ENCODE measurements at regions of chr4 and their contacts with region 1.

Region 1: DNA sequence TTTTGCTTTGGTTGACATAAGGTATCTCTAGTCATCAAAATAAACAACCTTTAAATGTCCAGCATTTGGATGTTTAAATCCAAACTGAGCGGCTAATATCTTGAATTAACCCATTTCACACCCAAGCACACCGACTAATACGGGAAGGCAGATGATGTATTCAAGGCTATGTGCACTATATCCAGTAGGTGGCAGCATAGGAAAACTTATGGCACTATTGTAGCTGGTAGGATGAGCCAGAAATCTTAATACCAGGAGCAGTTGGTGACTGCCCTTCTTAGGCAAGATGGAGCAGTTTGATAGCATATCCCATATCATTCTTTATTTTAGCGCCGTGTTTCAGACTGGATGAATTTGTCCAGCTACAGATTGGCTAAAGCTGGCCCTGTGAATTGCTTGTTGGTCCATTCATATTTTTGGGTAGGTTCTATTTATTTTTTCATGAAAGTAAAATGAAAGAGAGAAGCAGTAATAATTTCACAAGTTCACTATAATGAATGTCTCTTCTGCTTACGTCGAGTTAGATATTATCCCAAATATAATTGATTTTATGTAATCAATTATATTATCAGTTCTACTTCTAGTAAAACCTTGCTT is 24.4 kb downstream of the UCHL1 start:
- DNase-seq: peak in 1 of 2 donors; percentile 91
- H3K4me3 ChIP-seq: no peak overlapping the region
- H3K27ac ChIP-seq: no peak overlapping the region
- H3K4me1 ChIP-seq: peaks cover 0 to 5% (median 2%) of the 10 kb centered on the region in 4 donors
- H3K27me3 ChIP-seq: peaks cover 0 to 5% (median 0%) of the 10 kb centered on the region in 3 donors
- CTCF ChIP-seq: peak in 5 of 7 experiments; percentile 74 to 93 (median 83)
- EP300 ChIP-seq: no peak
- POLR2A ChIP-seq: no peak

Region 2: GRCh38 chr4:41241919-41242318 is 39.2 kb before region 1 on chr4:
- intact Hi-C with region 1: no loop called
- DNase-seq: no peak
- H3K4me3 ChIP-seq: no peak overlapping the region
- H3K27ac ChIP-seq: no peak overlapping the region
- H3K4me1 ChIP-seq: no peaks in the 10 kb centered on the region
- H3K27me3 ChIP-seq: peaks cover 0 to 10% (median 0%) of the 10 kb centered on the region in 3 donors
- CTCF ChIP-seq: no peak
- EP300 ChIP-seq: no peak
- POLR2A ChIP-seq: no peak

Region 3: DNA sequence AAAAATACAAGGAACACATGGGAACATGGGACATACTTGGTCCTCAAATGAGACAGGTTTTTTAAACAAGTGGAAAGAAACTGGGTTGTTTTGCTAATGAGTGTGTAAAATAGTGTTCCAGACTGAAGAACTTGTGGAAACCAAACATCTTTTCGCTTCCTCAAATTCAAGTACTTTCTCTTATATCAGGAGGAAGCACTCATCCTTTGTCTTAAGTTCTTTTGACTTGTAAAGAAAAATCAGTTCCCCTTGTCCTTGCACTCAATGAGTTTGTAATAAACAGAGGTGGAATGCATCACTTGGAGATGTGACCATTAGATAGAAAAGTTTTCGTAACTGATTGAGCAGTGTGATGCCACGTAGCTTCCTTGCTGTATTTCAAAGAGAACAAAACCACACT is 366.2 kb after region 1 on chr4:
- intact Hi-C with region 1: loop called (anchors 5 kb)
- DNase-seq: no peak
- H3K4me3 ChIP-seq: no peak overlapping the region
- H3K27ac ChIP-seq: no peak overlapping the region
- H3K4me1 ChIP-seq: peaks cover 7 to 12% (median 8%) of the 10 kb centered on the region in 4 donors
- H3K27me3 ChIP-seq: peaks cover 0 to 22% (median 5%) of the 10 kb centered on the region in 3 donors
- CTCF ChIP-seq: no peak
- EP300 ChIP-seq: no peak
- POLR2A ChIP-seq: no peak